ENCODE measurements at regions of chrX and their contacts with region 1.

Region 1: DNA sequence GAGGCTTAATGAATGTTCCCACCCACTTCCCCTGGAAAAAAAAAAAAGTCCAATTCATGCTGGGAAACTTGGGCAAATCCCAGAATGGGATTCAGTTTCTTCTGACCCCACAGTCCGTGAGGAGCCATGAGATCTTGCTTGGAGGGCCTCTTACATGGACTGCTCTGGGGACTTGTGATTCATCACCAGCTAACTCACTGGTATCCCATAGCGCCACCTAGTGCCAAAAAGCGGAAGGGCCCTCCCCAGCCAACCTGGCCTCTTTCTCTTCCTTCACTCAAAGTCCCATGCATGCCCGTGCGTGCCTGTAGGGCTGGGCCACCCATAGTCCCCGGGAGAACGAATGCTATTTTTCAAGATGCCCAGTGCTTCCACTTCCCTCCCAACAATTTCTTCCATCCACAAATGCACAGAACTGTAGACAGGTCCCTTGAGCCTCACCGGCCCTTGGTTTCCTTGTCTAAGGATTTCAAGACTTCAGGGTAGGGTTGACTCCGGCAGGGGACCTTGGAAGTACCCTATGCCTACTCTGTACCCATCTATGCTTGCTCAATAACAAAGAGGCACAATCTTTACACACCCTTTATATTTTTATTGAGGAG is 5.1 kb downstream of the RTL5 start:
- DNase-seq: peak; percentile 76 to 85 (median 80)
- ATAC-seq: peak; percentile 85 to 89 (median 86)
- H3K4me3 ChIP-seq: no peak overlapping the region
- H3K27ac ChIP-seq: no peak overlapping the region
- H3K4me1 ChIP-seq: peaks cover 0 to 5% (median 2%) of the 10 kb centered on the region in 4 donors
- H3K27me3 ChIP-seq: no peaks in the 10 kb centered on the region
- CTCF ChIP-seq: peak; percentile 85 to 91 (median 91)
- POLR2A ChIP-seq: no peak

Region 2: DNA sequence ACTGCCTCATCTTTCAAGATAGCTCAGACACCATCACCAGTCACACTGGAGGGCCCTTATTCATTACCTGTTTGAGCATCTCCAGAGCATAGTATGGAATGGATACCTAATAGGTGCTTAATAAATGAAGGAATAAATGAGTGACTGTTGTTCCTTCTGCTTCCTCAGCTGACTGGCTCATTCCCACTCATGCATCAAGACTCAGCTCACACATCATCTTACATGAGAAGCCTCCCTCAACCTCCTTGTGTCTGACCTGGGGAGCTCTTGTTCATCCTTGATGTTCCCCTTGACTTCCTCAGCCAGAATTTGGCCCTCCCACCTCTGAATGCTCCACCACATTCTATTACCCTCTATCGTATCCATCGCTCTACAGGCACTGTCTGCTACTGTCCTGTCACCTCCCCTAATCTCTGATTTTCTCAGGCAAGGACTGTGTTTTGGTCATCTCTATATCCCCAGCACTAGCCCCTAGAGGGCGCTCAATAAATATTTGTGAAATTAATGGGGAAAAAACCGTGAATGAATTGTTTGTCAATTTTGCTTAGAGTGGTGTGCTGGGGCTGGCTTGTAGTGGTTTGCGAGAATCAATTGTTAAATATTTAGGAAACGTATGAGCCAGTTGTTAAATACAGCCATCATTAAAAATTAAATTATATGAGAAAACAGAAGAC is 127.7 kb before region 1 on chrX:
- intact Hi-C with region 1: loop called (anchors 10 kb)
- DNase-seq: no peak
- ATAC-seq: peak; percentile 75 to 86 (median 80)
- H3K4me3 ChIP-seq: no peak overlapping the region
- H3K27ac ChIP-seq: no peak overlapping the region
- H3K4me1 ChIP-seq: no peaks in the 10 kb centered on the region
- H3K27me3 ChIP-seq: no peaks in the 10 kb centered on the region
- CTCF ChIP-seq: peak; percentile 66 to 76 (median 70)
- POLR2A ChIP-seq: no peak

Region 3: GRCh38 chrX:72021975-72022374 is 104.7 kb before region 1 on chrX:
- intact Hi-C with region 1: loop called in 1 of 2 experiments (anchors 10 kb)
- DNase-seq: no peak
- ATAC-seq: no peak
- H3K4me3 ChIP-seq: no peak overlapping the region
- H3K27ac ChIP-seq: no peak overlapping the region
- H3K4me1 ChIP-seq: no peaks in the 10 kb centered on the region
- H3K27me3 ChIP-seq: no peaks in the 10 kb centered on the region
- CTCF ChIP-seq: peak; percentile 16 to 43 (median 36)
- POLR2A ChIP-seq: no peak